Transverse colon (tissue), 4 donors: ENCODE measurements at regions of chr9 and their contacts with region 1.

Region 1: DNA sequence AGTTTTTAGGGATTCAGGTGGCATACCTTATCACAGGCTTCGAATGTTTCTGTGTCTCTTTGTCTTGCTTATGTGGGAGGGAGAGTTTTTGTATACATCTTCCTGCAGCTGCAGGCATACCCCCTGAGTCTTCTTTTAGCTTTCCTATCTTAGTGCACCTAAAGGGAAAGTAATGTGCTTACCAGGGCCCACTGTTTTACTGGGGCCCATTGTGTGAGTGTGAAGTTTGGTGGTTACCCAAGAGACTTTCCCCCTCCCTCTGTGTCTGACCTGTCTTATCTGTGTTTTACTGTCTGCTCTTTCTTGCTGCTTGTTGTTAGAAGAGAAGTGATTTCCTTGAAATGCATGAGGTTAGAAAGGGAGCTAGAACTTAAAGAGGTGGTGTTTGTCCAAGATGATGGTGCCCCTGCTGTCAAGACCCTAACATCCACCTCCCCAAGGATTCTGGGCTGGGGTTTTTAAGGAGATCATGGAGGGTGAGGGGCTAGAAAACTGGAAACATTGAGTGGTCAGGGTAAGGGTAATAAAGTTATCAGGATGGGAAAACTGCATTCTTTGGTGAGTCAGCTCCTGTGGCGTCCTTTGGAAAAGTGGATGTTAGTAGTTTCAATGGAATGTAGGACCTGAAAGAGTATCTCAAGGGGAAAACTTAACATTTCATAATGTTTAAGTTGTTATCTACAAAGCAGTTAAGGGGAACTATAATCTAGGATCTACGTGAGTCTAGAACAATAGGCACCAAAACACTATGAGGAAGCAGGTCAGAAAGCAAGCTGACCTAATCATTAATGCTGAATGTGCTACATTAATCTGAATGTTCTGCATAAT is 583.5 kb upstream of the TUSC1 start:
- DNase-seq: no peak
- H3K4me3 ChIP-seq: no peak overlapping the region
- H3K27ac ChIP-seq: no peak overlapping the region
- H3K4me1 ChIP-seq: no peaks in the 10 kb centered on the region
- H3K27me3 ChIP-seq: no peaks in the 10 kb centered on the region
- CTCF ChIP-seq: no peak
- EP300 ChIP-seq: no peak
- POLR2A ChIP-seq: no peak

Region 2: GRCh38 chr9:26369093-26369492 is 107.4 kb after region 1 on chr9:
- in situ Hi-C with region 1: loop called in 1 of 4 experiments (anchors 25 kb)
- intact Hi-C with region 1: no loop called
- DNase-seq: no peak
- H3K4me3 ChIP-seq: no peak overlapping the region
- H3K27ac ChIP-seq: no peak overlapping the region
- H3K4me1 ChIP-seq: no peaks in the 10 kb centered on the region
- H3K27me3 ChIP-seq: no peaks in the 10 kb centered on the region
- CTCF ChIP-seq: no peak
- EP300 ChIP-seq: no peak
- POLR2A ChIP-seq: no peak